GM10248 (cell line): ENCODE measurements at regions of chr4 and their contacts with region 1.

Region 1: DNA sequence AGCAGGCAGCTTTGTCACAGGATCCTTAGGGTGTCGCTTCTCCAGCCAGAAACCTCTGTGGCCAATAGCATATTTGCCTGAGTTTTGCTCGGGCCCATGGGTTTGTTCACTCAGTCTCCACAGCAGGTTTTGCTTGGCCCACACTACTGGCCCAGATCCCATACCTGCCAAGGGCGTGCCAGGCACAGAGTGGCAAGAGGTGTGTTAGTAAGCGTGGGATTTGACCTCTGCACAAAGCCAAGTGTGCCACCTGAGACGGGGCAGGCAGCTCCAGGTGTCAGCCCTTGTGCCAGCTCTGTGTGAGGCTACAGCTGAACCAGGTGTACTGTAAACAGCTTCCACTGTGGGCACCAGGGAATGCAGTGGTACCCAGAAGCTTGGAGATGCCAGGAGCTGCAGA is 2003.0 kb downstream of the C4orf33 start:
- DNase-seq: no peak
- CTCF ChIP-seq: no peak

Region 2: DNA sequence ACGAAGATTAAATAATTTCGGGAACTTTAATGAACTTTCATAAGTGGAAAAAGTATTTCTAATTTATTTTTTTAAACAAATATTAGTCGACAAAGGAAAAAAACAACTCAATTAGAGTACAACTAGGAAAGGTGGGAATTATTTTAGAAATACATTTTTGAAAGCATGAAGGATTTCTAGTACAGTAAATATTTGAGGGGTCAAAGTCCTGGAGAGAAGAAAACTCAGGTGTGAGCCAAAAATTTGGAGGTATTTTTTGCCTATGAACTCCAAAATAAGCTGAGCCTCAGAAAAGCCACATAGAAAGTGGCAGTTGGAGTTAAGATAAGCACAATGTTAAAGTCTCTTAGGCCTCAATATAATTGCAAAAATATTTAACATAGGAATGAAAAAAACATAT is 14.3 kb after region 1 on chr4:
- CTCF ChIA-PET with region 1: interaction called, 10 read pairs
- POLR2A ChIA-PET with region 1: no interaction called
- DNase-seq: no peak
- CTCF ChIP-seq: no peak